ENCODE measurements at regions of chr5 and their contacts with region 1.

Region 1: DNA sequence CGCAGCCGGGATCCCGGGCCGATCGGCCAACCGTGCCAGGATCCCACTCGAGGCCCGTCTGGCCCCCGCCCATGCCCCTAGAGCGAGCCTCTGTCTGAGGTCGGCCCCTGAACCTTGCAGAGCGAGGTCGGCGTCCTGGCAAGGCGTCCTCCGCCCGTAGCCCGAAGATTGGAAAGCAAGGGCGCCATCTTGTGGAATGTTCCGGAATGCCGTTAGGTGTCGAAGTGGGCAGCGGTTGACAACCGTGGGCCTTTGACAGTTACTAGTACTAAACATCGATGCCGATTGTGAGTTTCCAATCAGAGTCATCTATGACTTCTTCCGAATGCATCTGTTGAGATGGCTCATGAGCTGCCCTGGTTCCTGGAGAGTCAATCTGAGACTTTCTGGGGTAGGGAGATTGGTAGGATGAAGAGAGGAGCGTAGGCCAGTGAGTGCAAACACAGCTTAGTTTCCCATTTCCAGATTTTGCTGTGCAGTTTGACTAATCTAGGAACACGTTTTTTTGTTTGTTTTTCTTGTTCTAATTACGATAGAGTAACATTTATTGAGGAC is 923 bp upstream of the PLK2 start:
- DNase-seq: peak; percentile 89 to 94 (median 93)
- ATAC-seq: peak; percentile 86
- H3K4me3 ChIP-seq: peak overlapping the region; percentile 62 to 77
- H3K27ac ChIP-seq: peak overlapping the region; percentile 96 to 99
- H3K4me1 ChIP-seq: peaks cover 0 to 23% of the 10 kb centered on the region in 2 donors
- H3K27me3 ChIP-seq: peaks cover 0 to 20% of the 10 kb centered on the region in 2 donors
- CTCF ChIP-seq: peak; percentile 52 to 69

Region 2: GRCh38 chr5:57298295-57298984 is 1162.4 kb before region 1 on chr5:
- intact Hi-C with region 1: loop called in 1 of 2 experiments (anchors 5 kb)
- DNase-seq: peak in 3 of 4 donors; percentile 72 to 88 (median 78)
- ATAC-seq: peak; percentile 97
- H3K4me3 ChIP-seq: no peak overlapping the region
- H3K27ac ChIP-seq: peak overlapping the region in 1 of 2 donors; percentile 40
- H3K4me1 ChIP-seq: peaks cover 0 to 12% of the 10 kb centered on the region in 2 donors
- H3K27me3 ChIP-seq: no peaks in the 10 kb centered on the region
- CTCF ChIP-seq: peak; percentile 61 to 74

Region 3: DNA sequence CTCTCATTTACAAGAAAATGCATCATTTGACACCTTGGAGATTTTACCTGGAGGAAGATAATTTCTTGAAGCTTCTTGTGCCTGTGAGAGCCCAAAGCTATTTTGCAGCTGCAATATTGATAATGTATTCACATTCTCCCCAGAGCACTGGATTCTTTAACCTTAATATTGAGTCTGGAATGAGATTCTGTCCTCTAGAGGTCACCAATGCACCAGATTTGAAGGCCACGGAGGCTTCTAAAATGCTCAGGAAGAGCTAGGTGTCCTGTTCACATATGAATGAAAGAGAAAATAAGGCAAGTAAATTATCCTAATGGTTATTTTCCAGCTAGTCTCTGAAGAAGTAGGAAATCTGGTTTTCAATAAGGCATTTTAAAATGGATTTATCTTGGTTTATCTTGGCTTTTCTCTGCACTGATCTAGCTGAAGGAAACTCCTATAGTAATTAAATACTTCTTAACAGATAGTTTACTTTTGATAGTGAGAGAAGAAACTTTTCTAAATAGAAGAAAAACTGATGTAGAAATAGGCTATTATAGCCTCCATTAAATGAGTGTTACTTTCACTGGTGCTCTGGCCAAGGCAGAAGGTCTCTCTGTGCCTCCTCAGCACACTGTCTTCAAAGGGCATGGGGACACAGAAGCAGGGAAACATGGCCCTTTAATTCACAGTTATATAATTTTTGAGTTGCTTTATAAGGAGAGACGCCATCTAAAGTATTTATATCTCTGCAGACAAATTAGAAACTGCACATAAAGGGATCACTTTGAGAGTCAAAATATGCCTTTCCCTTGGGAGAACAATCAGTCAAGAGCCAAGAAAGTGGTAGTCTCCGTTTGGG is 681.2 kb before region 1 on chr5:
- intact Hi-C with region 1: loop called in 1 of 2 experiments (anchors 5 kb)
- DNase-seq: peak in 2 of 4 donors; percentile 49 to 67
- ATAC-seq: peak; percentile 90
- H3K4me3 ChIP-seq: no peak overlapping the region
- H3K27ac ChIP-seq: no peak overlapping the region
- H3K4me1 ChIP-seq: peaks cover 5 to 20% of the 10 kb centered on the region in 2 donors
- H3K27me3 ChIP-seq: no peaks in the 10 kb centered on the region
- CTCF ChIP-seq: peak; percentile 25 to 58

Region 4: GRCh38 chr5:57887851-57888621 is 572.8 kb before region 1 on chr5:
- intact Hi-C with region 1: loop called in 1 of 2 experiments (anchors 10 kb)
- DNase-seq: peak in 1 of 4 donors; percentile 63
- ATAC-seq: peak; percentile 96
- H3K4me3 ChIP-seq: no peak overlapping the region
- H3K27ac ChIP-seq: no peak overlapping the region
- H3K4me1 ChIP-seq: peaks cover 0 to 3% of the 10 kb centered on the region in 2 donors
- H3K27me3 ChIP-seq: no peaks in the 10 kb centered on the region
- CTCF ChIP-seq: peak; percentile 30 to 48

Region 5: GRCh38 chr5:59209758-59210359 is 749.0 kb after region 1 on chr5:
- intact Hi-C with region 1: no loop called
- DNase-seq: no peak
- ATAC-seq: no peak
- H3K4me3 ChIP-seq: no peak overlapping the region
- H3K27ac ChIP-seq: no peak overlapping the region
- H3K4me1 ChIP-seq: peaks cover 0 to 5% of the 10 kb centered on the region in 2 donors
- H3K27me3 ChIP-seq: no peaks in the 10 kb centered on the region
- CTCF ChIP-seq: no peak